Activated naive CD8-positive, alpha-beta T cell treated with anti-CD3 and anti-CD28 coated beads, Interleukin-2, amount 10 ng/mL, durations not matched to agents 7 days and 5 days (primary cell): ENCODE measurements at regions of chr10 and their contacts with region 1.

Region 1: DNA sequence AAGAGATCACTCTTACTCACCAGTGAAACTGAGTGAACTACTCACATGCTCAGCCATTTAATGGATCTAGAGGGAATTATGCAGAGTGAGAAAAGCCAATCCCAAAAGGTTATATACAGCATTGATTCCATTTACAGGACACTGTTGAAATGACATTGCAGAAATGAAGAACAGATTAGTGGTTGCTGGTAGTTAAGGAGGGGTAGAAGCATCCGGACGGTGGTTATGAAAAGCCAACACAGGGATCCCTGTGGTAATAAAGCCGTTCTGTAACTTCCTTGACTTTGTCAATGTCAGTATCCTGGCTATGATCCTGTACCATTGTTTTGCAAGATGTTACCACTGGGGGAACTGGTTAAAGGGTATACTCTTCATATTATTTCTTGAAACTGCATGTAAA is 253.4 kb downstream of the USP6NL start:
- DNase-seq: no peak
- ATAC-seq: no peak
- H3K4me3 Mint-ChIP-seq: no peak overlapping the region
- H3K27ac Mint-ChIP-seq: no peak overlapping the region
- H3K4me1 Mint-ChIP-seq: peaks cover 7% of the 10 kb centered on the region
- H3K27me3 Mint-ChIP-seq: no peaks in the 10 kb centered on the region

Region 2: DNA sequence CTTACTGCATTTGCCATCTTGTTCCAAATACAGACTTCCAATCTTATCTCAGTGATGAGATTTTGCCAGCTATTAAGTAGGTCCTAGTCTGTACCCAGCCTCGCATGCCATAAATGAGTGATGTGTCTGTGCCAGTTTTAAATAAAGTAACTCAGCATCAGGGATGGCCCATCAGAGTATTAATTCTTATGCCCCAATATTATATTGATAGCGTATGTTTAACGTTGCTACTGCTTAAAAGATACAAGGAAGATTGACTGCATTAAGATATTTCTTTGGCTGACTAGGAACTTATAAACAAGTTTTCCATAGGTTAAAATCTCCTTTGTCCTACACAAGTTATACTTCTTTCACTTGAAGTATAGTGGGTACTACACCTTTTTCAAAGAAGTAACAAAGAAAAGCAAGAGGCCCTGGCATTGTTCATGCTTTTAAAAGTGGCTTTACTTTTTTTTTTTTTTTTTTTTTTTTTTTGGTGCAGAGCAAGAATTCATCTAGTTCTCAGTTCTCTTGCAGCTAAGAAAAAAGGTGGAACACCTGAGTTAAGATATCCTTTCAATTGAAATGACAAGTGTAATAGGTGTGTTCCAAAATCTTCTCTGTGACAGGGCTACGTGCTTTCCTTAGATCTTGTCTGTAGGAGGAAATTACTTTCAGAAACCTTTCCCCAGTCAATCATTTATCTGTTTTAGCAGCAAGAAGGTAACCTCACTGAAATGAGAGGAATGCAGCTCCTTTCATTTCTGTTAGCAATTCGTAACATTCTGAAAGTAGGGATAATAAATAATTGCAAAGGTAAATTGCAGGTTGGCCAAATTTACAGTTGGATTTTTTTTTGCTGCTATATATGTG is 95.3 kb before region 1 on chr10:
- POLR2A ChIA-PET with region 1: interaction called, 10 read pairs
- DNase-seq: no peak
- ATAC-seq: no peak
- H3K4me3 Mint-ChIP-seq: no peak overlapping the region
- H3K27ac Mint-ChIP-seq: peak overlapping the region; percentile 14
- H3K4me1 Mint-ChIP-seq: peaks cover 37% of the 10 kb centered on the region
- H3K27me3 Mint-ChIP-seq: no peaks in the 10 kb centered on the region

Region 3: DNA sequence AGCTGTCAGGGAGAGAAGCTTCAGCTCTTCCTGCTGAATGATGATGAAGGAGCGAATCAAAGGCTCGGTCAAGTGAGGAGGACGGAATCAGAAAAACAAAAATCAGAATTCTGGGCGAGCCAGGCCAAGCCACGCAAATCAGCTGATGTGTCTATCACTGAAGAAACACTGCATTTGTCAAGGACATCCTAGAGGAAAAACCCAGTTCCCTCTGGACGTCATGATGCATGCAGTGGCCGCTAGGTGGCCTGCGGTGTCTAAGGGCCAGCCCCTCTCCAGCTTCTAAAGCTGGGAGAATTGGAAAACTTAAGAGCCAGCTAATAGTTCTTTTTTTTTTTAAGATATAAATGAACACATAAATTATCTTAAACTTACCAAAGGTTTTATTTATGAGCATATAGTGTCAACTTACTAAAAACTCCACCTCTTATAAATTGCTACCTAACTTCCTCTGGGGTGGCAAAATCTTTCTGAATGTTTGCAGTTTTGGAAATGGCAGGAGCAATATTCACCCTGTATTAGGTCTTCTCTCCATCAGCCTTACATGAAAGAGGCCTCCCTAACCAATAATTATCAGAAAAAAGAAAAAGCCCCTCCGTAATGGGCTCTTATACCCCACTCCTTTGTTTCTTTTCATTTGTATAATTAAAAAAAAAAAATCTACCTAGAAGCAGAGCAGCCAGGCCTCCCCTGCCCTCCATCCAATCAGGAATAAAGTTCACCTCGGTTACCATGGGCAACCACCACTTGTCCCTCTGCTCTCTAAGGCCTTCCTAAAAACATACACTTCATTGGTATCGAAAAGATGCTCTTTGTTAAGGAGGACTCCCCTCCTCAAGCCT is 66.7 kb after region 1 on chr10:
- POLR2A ChIA-PET with region 1: no interaction called
- DNase-seq: no peak
- ATAC-seq: no peak
- H3K4me3 Mint-ChIP-seq: no peak overlapping the region
- H3K27ac Mint-ChIP-seq: no peak overlapping the region
- H3K4me1 Mint-ChIP-seq: peaks cover 2% of the 10 kb centered on the region
- H3K27me3 Mint-ChIP-seq: peaks cover 2% of the 10 kb centered on the region